Ovary (tissue), 10 donors: ENCODE measurements at regions of chr6 and their contacts with region 1.

Region 1: DNA sequence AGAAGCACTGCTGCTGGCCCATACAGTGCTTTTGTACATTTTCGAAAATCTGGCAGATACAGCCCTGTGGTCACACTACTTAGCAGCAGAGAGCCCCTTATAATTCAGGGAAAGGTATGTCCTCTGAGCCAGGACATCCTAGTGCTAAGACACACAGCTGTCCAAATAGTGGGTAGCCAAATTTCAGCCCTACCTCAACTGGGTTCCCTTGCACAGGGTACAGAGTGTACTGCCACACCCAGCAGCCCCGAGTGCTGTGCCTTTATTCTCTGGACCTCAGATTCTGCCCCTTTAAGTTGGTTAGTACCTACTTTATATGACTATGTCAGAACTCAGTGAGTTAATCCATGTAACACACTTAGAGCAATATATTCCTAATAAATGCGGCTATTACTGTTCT is 47.6 kb downstream of the PRPH2 start:
- DNase-seq: no peak
- H3K4me3 ChIP-seq: no peak overlapping the region
- H3K27ac ChIP-seq: no peak overlapping the region
- H3K4me1 ChIP-seq: no peaks in the 10 kb centered on the region
- H3K27me3 ChIP-seq: no peaks in the 10 kb centered on the region
- CTCF ChIP-seq: no peak
- EP300 ChIP-seq: no peak
- POLR2A ChIP-seq: no peak

Region 2: DNA sequence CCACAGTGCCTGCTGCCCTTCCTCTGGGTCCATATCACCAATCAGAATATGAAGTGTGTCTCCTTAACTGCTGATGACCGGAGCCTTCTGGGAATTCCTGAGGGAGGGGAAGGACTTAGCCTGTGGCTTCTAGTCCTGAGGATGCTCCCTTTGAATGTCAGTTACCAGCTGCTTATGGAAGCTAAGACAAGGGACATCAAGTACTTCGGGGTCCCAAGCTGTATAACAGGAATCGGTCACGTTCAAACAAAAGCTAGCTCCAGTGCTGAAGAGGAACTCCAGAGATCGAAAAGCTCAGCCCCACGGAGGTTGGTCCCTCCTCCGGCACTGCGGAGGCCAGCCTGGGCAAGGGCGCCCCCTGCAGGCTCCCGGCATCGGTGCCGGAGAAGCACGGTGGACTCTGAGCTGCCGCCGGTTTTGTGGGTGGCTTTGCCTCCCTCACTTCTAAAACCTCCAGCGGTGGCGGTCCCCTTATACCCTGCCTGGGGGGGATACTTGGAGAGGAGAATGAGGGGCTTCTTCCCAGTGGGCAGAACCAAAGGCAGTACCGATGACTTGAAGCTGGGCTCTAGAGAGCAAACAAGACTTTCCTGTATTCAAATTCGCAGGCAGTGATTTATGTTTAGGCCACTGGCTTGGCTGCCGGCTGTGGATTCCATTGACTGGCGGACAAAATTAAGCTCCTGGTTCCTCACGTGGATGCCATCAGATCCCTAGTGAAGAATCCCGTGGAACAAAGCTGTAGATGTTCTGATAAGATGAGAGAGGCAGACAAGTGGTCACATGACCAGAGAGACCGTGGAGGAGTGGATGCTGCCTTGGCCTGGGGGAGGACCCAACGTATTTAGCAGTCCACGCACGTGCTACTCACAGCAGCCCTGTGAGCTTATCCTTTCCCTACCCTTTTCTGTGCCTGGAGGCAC is 127.1 kb before region 1 on chr6:
- intact Hi-C with region 1: no loop called
- DNase-seq: peak; percentile 74 to 89 (median 81)
- H3K4me3 ChIP-seq: peak overlapping the region; percentile 31
- H3K27ac ChIP-seq: no peak overlapping the region
- H3K4me1 ChIP-seq: peaks cover 2% of the 10 kb centered on the region
- H3K27me3 ChIP-seq: no peaks in the 10 kb centered on the region
- CTCF ChIP-seq: peak; percentile 84 to 91 (median 89)
- EP300 ChIP-seq: no peak
- POLR2A ChIP-seq: peak; percentile 17

Region 3: DNA sequence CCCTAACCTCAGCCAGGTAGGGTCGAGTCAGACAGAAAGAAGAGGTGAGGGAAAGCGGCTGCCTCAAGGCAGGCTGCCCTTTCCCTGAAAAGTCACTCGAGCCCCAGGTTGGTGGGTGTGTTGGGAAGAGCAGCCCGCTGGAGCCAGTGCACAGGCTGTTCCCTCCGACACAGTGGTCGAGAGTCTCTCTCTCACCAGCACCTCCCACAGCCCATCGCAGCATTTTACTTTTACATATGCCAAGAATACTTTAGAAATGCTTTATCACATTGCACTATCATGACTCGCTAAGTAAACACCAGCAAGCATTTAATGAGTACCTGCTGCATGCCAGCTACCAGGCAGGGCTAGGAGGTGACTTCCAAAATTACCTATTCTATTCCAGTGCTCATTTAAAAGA is 46.0 kb after region 1 on chr6:
- intact Hi-C with region 1: loop called in 2 of 4 experiments (anchors 5 kb)
- DNase-seq: no peak
- H3K4me3 ChIP-seq: no peak overlapping the region
- H3K27ac ChIP-seq: no peak overlapping the region
- H3K4me1 ChIP-seq: no peaks in the 10 kb centered on the region
- H3K27me3 ChIP-seq: no peaks in the 10 kb centered on the region
- CTCF ChIP-seq: no peak
- EP300 ChIP-seq: no peak
- POLR2A ChIP-seq: no peak